SK-N-SH (cell line): ENCODE measurements at regions of chr19 and their contacts with region 1.

Region 1: GRCh38 chr19:55503502-55504251 is 15.4 kb downstream of the SSC5D start:
- DNase-seq: peak; percentile 99
- H3K4me3 ChIP-seq: peak overlapping the region; percentile 49 to 62
- H3K27ac ChIP-seq: peak overlapping the region in 1 of 2 experiments; percentile 71; a peak in 1 of 4 replicates
- H3K4me1 ChIP-seq: peaks cover 0 to 6% of the 10 kb centered on the region in 2 experiments; a peak in 1 of 4 replicates
- H3K27me3 ChIP-seq: no peaks in the 10 kb centered on the region
- CTCF ChIP-seq: peak; percentile 96
- EP300 ChIP-seq: no peak
- RAD21 ChIP-seq: peak; percentile 93

Region 2: DNA sequence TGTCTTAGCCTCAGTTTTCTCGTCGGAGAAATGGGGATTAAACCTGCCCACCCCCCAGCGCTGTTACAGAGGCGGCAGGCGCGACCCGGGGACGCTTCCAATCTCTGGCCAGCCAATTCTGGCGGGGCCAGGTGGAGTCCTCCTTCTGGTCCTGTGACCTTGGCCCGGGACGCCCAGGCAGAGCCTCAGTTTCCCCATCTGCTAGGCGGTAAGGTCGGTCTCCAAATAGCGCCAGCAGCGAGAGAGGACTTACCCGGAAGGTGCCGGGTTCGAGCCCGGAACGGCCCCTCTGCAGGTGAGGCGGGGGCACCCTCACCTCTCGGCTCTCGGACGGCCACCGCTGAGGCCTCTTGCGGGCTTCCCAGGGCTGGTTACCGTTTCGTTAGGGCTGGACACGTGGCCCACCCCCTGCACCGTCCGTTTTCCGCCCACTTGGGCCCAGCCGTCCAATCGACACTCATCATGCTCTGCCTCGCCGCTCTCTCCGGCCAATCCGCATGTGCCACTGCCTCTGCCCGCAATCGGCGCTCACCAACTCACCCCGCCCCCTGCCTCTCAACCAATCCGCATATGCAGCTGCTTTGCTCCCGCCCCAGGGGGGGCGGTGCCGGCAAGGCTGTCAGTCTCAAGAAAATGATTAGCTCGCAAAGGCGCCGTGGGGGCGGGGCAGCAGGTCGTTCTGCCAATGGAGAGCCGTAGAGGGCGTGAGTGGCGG is 42.3 kb before region 1 on chr19 and contains the start of gene ISOC2:
- CTCF ChIA-PET with region 1: interaction called, 81 read pairs
- POLR2A ChIA-PET with region 1: interaction called, 3 read pairs
- DNase-seq: peak; percentile 97
- H3K4me3 ChIP-seq: peak within 1 kb of the TSS; percentile 76 to 98
- H3K27ac ChIP-seq: peak within 1 kb of the TSS; percentile 90 to 91
- H3K4me1 ChIP-seq: peaks cover 9 to 18% of the 10 kb centered on the region in 2 experiments; a peak in 2 of 4 replicates
- H3K27me3 ChIP-seq: no peaks in the 10 kb centered on the region
- CTCF ChIP-seq: no peak
- EP300 ChIP-seq: no peak
- RAD21 ChIP-seq: no peak
- polyA plus RNA-seq, gene ISOC2: 60.9 and 65.4 TPM in 2 replicates

Region 3: DNA sequence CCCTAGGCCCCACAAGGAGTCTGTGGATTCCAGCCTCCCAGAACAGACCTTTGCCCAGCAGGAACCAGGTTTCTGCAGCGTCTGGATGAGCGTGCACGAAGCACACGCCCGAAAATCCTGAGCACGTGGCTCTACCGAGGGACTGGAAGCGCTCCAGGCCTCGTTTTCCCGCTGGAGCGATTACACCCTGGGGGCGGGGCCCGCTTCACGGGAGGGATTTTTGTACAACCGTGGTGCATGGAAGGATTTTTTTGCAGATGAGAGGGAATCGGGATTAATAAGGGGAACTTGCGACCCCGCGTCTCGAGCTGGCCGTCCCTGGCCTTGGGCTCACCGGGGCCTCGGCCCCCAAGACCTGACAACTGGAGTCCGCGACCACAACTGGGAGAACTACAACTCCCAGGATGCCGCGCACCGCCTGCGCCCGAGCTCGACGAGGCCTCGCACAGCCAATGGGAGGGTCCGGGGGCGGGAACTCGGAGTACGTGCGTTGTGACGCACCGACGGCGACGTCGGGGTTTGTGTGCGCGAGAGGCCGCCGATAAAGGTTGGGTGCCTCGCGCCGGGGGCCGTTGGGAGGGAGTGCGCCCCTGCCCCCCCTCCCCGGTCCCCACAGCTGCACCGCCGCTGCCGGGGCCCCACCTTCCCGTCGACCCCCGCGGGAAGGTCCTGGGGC is 27.4 kb before region 1 on chr19 and contains the start of gene ZNF628:
- CTCF ChIA-PET with region 1: interaction called, 46 read pairs
- POLR2A ChIA-PET with region 1: interaction called, 12 read pairs
- DNase-seq: peak; percentile 96
- H3K4me3 ChIP-seq: peak within 1 kb of the TSS; percentile 56 to 79
- H3K27ac ChIP-seq: peak within 1 kb of the TSS; percentile 64 to 91
- H3K4me1 ChIP-seq: peaks cover 11 to 16% of the 10 kb centered on the region in 2 experiments; a peak in 2 of 4 replicates
- H3K27me3 ChIP-seq: no peaks in the 10 kb centered on the region
- CTCF ChIP-seq: no peak
- EP300 ChIP-seq: no peak; a peak in 1 of 4 replicates
- RAD21 ChIP-seq: no peak
- polyA plus RNA-seq, gene ZNF628: 0.73 and 1.6 TPM in 2 replicates

Region 4: GRCh38 chr19:55516878-55517620 is 13.4 kb after region 1 on chr19:
- CTCF ChIA-PET with region 1: interaction called, 36 read pairs
- POLR2A ChIA-PET with region 1: no interaction called
- DNase-seq: peak; percentile 100
- H3K4me3 ChIP-seq: peak overlapping the region; percentile 46 to 54
- H3K27ac ChIP-seq: peak overlapping the region; percentile 38 to 39; a peak in 1 of 4 replicates
- H3K4me1 ChIP-seq: peaks cover 0 to 11% of the 10 kb centered on the region in 2 experiments; a peak in 1 of 4 replicates
- H3K27me3 ChIP-seq: no peaks in the 10 kb centered on the region
- CTCF ChIP-seq: peak; percentile 83
- EP300 ChIP-seq: no peak
- RAD21 ChIP-seq: peak; percentile 91